A549 (cell line): ENCODE measurements at regions of chr5 and their contacts with region 1.

Region 1: DNA sequence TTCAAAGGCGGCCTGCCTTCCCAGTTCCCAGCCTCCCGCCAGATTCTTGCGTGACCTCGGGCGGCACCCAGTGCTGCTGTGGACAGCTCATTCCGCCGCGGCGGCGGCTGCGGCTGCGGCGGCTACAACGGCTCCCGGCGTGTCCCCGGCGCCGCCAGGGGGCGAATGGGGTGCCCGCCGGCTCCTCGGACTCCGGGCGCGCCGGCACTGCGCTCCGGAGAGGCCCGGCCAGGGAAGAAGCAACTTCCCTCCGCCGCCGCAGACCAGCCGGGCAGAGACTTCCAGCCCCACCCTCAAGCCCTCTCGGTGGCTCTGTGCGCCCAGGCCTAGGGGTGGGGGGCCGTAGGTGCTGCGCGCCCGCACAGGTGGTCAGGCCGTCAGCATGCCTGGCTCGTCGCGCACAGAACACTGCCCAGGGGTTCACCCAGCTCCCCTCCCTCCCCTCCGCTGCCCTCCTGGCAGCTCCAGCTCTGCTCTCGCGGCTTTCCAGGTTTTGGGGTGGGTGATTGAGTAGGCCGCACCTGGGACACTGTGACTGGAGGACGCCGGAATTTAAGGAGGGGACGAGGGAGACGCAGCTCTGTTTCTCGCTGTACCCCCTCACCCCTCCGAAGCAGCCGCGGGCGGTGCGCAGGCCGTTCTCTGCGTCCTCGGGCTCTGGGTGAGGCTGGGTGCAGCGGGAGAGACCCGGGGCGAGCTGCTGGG is 20.2 kb downstream of the IGIP start:
- DNase-seq: peak; percentile 51 to 68
- ATAC-seq: peak; percentile 89 to 92
- H3K4me3 ChIP-seq: peak overlapping the region; percentile 31
- H3K27ac ChIP-seq: peak overlapping the region in 1 of 2 experiments; percentile 48; a peak in 2 of 6 replicates
- H3K4me1 ChIP-seq: peaks cover 5% of the 10 kb centered on the region; the same call in 2 of the 3 replicates
- CTCF ChIP-seq: peak; percentile 52
- EP300 ChIP-seq: no peak
- POLR2A ChIP-seq: no peak
- RAD21 ChIP-seq: peak in 1 of 2 experiments; percentile 5; a peak in 2 of 5 replicates

Region 2: GRCh38 chr5:140073296-140073695 is 72.7 kb before region 1 on chr5:
- CTCF ChIA-PET with region 1: interaction called, 96 read pairs
- POLR2A ChIA-PET with region 1: no interaction called
- DNase-seq: no peak
- ATAC-seq: no peak
- H3K4me3 ChIP-seq: no peak overlapping the region
- H3K27ac ChIP-seq: no peak overlapping the region
- H3K4me1 ChIP-seq: no peaks in the 10 kb centered on the region
- CTCF ChIP-seq: peak; percentile 73
- EP300 ChIP-seq: no peak
- POLR2A ChIP-seq: no peak
- RAD21 ChIP-seq: peak; percentile 70 to 71

Region 3: DNA sequence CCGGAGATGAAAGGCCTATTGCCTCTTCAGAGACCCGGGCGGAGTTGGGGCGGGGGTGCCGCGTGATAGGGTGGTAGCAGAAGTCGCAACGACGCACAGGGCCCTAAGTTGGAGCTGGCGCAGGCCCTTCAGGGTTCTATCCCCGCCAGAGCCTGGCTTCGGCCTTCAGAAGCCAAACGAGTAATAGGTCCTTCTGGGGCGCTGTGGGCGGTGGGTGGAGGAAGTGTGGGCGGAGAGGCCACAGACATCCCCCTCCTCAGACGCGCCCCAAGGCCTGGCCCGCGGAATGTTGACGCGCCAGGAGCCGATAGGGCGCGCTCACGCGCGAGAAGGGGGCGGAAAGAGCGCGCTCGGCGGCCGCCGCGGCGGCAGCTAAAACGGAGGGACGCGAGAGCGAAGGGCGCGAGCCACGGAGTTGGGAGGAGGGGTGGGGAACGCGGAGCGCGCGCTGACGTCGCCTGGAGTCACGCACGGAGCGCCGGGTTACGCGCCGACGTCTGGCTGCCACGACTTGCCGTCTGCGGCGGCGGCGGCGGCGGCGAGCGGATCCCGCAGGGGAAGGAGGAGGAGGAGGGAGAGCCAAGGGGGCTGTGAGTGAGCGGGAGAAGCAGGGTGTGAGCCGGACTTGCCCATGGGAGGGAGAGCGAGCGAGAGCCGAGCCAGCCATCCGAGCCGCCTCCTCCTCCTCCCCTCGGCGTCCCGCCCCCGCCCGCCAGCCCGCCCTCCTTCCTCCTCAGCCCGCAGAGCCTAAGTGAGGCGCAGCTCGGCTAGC is 38.5 kb before region 1 on chr5:
- CTCF ChIA-PET with region 1: interaction called, 20 read pairs
- POLR2A ChIA-PET with region 1: interaction called, 3 read pairs
- DNase-seq: peak; percentile 92 to 95
- ATAC-seq: peak; percentile 92 to 94
- H3K4me3 ChIP-seq: peak overlapping the region; percentile 82
- H3K27ac ChIP-seq: peak overlapping the region; percentile 77 to 97
- H3K4me1 ChIP-seq: peaks cover 20% of the 10 kb centered on the region
- CTCF ChIP-seq: peak; percentile 12; the same call in 1 of the 3 replicates
- EP300 ChIP-seq: no peak
- POLR2A ChIP-seq: peak; percentile 76
- RAD21 ChIP-seq: no peak

Region 4: GRCh38 chr5:140131967-140132409 is 14.0 kb before region 1 on chr5:
- CTCF ChIA-PET with region 1: interaction called, 114 read pairs
- POLR2A ChIA-PET with region 1: no interaction called
- DNase-seq: peak in 1 of 2 experiments; percentile 15
- ATAC-seq: peak in 1 of 2 experiments; percentile 58; a peak in 3 of 6 replicates
- H3K4me3 ChIP-seq: no peak overlapping the region
- H3K27ac ChIP-seq: no peak overlapping the region
- H3K4me1 ChIP-seq: 0 out of 3 replicates have a peak, but pooled peaks cover 11% of the 10 kb centered on the region
- CTCF ChIP-seq: no peak
- EP300 ChIP-seq: no peak
- POLR2A ChIP-seq: no peak
- RAD21 ChIP-seq: no peak

Region 5: DNA sequence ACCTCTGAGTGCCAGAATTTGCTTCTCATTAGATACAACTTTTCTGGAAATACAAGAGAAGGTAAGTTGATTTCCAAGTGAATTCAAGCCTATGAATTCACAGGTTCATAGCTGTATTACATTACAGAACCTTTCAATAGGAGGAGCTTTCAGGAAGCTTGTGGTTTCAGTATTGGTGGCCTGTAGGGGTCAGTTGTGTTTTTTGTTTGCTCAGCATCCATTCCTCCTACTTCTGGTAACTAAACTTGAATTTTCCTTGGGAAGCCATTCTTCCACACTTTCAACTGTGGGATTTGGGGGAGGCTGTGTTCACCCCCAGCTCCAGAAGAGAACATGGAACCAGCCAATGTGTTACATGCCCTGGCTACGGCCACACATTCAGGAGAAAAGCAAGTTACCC is 23.4 kb after region 1 on chr5:
- CTCF ChIA-PET with region 1: interaction called, 19 read pairs
- POLR2A ChIA-PET with region 1: no interaction called
- DNase-seq: peak in 1 of 2 experiments; percentile 33
- ATAC-seq: peak; percentile 37 to 61; a peak in 2 of 6 replicates
- H3K4me3 ChIP-seq: no peak overlapping the region
- H3K27ac ChIP-seq: no peak overlapping the region
- H3K4me1 ChIP-seq: peaks cover 11% of the 10 kb centered on the region
- CTCF ChIP-seq: no peak
- EP300 ChIP-seq: no peak
- POLR2A ChIP-seq: no peak
- RAD21 ChIP-seq: peak in 1 of 2 experiments; percentile 25; a peak in 1 of 5 replicates